Activated CD4-positive, alpha-beta T cell treated with anti-CD3 and anti-CD28 coated beads, Interleukin-2, amount 10 ng/mL, durations not matched to agents 24 days and 14 days (primary cell): ENCODE measurements at regions of chr11 and their contacts with region 1.

Region 1: DNA sequence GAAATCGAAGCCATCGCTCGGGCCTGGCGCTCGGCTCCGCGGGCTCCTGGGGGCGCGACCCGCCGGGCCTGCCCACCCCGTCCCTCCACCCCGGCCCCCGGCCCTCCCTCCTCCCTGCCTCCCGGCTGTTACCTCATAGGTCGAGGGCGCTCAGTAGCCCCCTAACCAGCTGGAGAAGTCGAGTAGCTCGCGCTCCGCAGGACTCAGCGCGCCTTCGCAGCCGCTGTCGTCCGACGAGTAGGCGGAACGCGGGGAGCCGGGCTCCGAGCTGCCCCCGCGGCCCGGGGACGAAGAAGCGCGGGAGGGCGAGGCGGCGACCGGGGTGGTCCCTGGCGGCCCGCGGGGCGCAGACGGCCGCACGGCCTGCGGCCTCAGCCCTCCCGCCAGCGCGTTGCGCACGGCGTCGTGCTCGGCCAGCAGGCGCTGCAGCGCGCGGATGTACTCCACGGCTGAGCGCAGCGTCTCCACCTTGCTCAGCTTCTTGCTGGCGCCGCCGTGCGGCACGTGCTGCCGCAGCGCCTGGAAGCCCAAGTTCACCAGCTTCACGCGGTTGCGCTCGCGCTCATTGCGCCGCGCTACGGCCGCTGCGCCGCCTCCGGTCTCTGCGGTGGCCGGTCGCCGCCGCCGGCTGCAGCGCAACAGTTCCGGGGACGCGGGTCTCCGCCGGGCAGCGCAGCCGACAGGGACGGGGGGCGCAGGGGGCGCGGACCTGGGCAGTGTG is 627 bp downstream of the ASCL2 start:
- DNase-seq: peak; percentile 84
- H3K4me3 Mint-ChIP-seq: peak overlapping the region; percentile 70
- H3K27ac Mint-ChIP-seq: peak overlapping the region; percentile 70
- H3K4me1 Mint-ChIP-seq: peaks cover 19% of the 10 kb centered on the region
- H3K27me3 Mint-ChIP-seq: peaks cover 30% of the 10 kb centered on the region

Region 2: DNA sequence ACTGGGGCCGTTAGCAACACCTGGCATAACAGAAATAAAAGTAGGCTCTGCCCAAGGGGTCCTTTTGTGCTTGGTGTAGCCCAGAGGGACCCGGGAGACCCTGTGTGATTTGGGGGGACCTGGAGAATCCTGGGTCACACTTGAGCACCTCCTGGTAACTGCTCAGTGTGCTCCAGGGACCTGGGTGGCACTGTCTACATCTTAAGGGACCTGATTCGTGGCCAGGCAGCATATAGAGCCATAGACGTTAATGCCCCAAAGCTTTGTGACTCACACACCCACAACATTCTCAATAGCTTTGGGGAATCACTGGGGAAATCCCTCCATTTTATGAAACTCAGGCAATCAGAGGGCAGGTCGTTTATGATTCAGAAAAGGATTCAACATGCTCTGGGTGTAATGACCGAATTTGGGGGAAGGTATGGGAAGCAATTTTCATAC is 127.0 kb before region 1 on chr11:
- intact Hi-C with region 1: loop called (anchors 1 kb)
- DNase-seq: no peak
- H3K4me3 Mint-ChIP-seq: peak overlapping the region; percentile 51
- H3K27ac Mint-ChIP-seq: peak overlapping the region; percentile 80
- H3K4me1 Mint-ChIP-seq: peaks cover 13% of the 10 kb centered on the region
- H3K27me3 Mint-ChIP-seq: peaks cover 61% of the 10 kb centered on the region